HEK293 (cell line): ENCODE measurements at regions of chr9 and their contacts with region 1.

Region 1: DNA sequence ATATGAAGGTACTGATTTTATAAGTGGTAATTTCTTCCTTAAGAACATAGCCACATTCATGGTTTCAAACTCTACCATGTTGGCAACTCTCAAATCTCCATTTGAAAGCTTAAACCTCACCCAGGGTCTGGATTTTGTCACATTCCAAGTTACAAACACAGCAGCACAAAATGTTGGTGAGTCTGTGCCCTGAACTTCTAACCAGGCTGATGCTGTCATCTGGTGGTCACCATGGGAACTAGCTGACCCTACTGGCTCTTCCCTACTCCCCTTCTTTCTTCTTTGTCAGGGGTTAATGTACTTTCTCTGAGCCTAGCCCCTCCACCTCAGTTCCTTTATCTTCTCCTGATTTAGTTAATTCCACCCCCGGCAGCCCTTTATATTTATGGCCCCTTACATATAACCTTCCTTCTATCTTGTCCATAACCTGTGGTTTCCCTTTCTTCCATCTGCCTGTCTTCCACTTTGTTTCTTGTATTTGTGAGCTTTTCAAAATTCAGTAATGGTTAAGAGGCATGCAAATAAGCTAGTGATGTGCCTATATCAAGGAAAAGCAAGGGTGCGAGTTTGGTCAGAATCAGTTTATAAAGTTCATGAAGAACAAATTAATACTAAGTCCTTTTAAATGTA is 35.9 kb downstream of the TGFBR1 start:
- H3K4me3 ChIP-seq: no peak overlapping the region
- H3K27ac ChIP-seq: no peak overlapping the region
- H3K4me1 ChIP-seq: no peaks in the 10 kb centered on the region
- CTCF ChIP-seq: peak; percentile 56

Region 2: DNA sequence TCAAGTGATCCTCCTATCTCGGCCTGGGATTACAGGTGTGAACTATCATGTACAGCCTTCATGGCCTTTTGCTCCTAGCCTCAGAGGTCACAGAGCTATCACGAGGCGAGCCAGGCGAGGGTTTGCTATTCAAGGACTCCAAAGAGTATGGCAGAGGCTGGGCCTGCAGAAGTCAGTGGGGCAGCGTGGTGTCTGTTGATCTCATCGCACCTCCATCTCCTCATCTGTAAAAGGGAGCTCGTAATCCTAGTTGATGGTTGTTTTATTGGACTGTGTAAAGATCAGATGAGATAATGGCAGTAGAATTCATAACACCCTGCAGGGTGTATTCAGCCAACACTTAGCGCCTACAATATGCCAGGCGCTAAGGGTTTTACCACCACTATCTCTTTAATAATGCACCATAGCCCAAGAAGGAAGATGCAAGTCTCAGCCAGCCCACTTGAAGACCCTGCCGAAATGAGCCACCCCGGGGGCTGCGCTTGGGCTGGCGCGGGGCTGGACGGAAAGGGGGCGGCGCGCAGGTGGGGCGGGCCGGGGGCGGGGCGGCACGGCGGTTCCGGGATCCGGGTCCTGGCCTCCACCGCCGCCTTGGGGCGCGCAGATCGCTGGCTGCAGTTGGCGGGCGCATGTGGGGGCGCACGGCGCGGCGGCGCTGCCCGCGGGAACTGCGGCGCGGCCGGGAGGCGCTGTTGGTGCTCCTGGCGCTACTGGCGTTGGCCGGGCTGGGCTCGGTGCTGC is 333.6 kb before region 1 on chr9 and contains the start of gene GALNT12:
- CTCF ChIA-PET with region 1: interaction called, 19 read pairs
- POLR2A ChIA-PET with region 1: no interaction called
- H3K4me3 ChIP-seq: peak within 1 kb of the TSS; percentile 46
- H3K27ac ChIP-seq: peak within 1 kb of the TSS; percentile 9; the same call in 1 of the 2 replicates
- H3K4me1 ChIP-seq: no peaks in the 10 kb centered on the region
- CTCF ChIP-seq: no peak

Region 3: GRCh38 chr9:98848450-98849149 is 292.2 kb before region 1 on chr9:
- CTCF ChIA-PET with region 1: interaction called, 55 read pairs
- POLR2A ChIA-PET with region 1: no interaction called
- H3K4me3 ChIP-seq: no peak overlapping the region
- H3K27ac ChIP-seq: no peak overlapping the region
- H3K4me1 ChIP-seq: no peaks in the 10 kb centered on the region
- CTCF ChIP-seq: peak; percentile 69; the same call in 1 of the 2 replicates

Region 4: GRCh38 chr9:98860871-98861293 is 279.9 kb before region 1 on chr9:
- CTCF ChIA-PET with region 1: interaction called, 27 read pairs
- POLR2A ChIA-PET with region 1: no interaction called
- H3K4me3 ChIP-seq: no peak overlapping the region
- H3K27ac ChIP-seq: no peak overlapping the region
- H3K4me1 ChIP-seq: no peaks in the 10 kb centered on the region
- CTCF ChIP-seq: peak; percentile 49; the same call in 1 of the 2 replicates

Region 5: GRCh38 chr9:98974994-98975712 is 165.6 kb before region 1 on chr9:
- CTCF ChIA-PET with region 1: interaction called, 16 read pairs
- POLR2A ChIA-PET with region 1: no interaction called
- H3K4me3 ChIP-seq: no peak overlapping the region
- H3K27ac ChIP-seq: no peak overlapping the region
- H3K4me1 ChIP-seq: no peaks in the 10 kb centered on the region
- CTCF ChIP-seq: peak; percentile 85

Region 6: DNA sequence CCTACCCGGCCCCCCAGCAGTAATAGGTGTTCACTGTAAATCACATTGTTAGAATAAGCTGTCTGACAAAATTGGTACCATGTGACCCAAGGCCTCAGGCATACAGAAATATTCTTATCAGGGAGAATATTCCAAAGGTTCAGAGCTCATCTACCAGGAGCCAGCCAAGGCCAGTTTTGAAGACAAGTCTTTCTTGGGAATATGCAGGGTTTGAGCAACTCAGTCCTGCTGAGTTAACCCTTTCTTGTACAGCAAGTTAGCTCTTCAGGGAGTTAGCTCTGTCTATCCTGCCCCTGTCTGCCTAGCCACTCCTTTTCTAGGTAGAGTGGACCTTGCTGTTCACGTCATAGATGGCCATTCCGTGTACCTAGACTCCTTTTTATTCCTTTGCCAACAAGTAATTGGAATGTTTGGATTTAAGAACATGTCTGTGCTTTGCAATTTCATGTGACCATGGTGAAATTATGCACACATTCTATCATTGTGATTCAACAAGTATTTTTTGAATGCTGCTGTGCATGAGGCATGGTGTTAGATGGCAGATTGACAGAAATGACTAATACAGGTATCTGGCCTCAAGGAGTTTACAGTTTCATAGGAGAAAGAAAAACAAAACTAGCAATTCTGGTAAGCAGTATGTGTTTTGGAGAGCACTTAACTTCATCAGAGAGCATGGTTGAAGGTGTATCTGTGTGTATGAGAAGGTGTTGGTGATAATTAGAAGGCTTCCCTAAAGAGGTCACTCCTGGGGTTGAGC is 13.2 kb before region 1 on chr9:
- CTCF ChIA-PET with region 1: interaction called, 13 read pairs
- POLR2A ChIA-PET with region 1: no interaction called
- H3K4me3 ChIP-seq: no peak overlapping the region
- H3K27ac ChIP-seq: no peak overlapping the region
- H3K4me1 ChIP-seq: peaks cover 3% of the 10 kb centered on the region; the same call in 1 of the 2 replicates
- CTCF ChIP-seq: no peak